ENCODE measurements at regions of chr19 and their contacts with region 1.

Region 1: DNA sequence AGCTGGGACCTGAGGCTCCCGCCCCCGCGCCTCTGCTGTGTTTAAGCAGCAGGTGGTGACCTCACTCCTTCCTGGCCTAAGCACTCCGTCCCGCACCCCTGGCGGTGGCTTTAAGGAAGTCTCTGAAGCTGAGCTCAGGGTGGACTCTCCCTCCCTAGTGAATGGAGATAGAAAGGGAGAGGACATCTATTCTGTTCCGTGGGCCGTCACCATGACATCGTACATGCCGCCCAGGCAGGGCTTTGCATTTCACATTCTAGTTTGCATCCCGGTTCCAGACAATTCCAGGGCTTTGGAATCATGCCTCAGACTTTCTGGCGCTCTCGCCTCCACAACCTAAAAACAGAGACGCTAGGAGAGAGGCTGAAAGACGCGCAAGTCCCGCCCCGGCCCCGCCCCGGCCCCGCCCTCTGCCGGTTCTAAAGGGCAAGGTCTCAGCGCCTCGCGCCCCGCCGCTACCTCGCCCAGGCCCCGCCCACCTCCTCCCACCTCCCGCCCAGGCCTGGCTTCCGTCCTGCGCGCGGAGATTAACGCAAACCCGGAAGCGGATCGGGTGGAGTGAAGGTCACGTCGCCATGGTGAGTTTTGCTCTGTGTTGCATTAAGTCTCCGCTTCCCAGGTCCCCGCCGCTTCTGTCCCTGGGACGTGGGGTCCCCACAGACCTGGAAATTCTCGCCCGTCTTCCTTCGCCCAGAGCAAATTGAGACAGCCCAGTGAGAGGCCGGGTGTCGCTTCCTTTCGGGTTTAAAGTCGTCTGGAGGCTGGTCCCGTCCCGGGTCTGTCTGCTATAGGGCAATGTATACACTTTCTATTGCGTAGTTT is at the start of gene ZNF808:
- DNase-seq: peak; percentile 79
- ATAC-seq: peak; percentile 89
- H3K4me3 Mint-ChIP-seq: peak within 1 kb of the TSS; percentile 98
- H3K27ac Mint-ChIP-seq: peak within 1 kb of the TSS; percentile 98
- H3K4me1 Mint-ChIP-seq: peaks cover 25% of the 10 kb centered on the region
- H3K27me3 Mint-ChIP-seq: no peaks in the 10 kb centered on the region
- CTCF ChIP-seq: no peak
- total RNA-seq, gene ZNF808: 31.1 and 33.7 TPM in 2 replicates

Region 2: GRCh38 chr19:52296773-52297600 is 230.4 kb before region 1 on chr19 and contains the start of gene ZNF480:
- CTCF ChIA-PET with region 1: no interaction called
- POLR2A ChIA-PET with region 1: no interaction called
- intact Hi-C with region 1: loop called (anchors 5 kb)
- DNase-seq: peak; percentile 78
- ATAC-seq: peak; percentile 80
- H3K4me3 Mint-ChIP-seq: peak within 1 kb of the TSS; percentile 98
- H3K27ac Mint-ChIP-seq: peak within 1 kb of the TSS; percentile 98
- H3K4me1 Mint-ChIP-seq: peaks cover 21% of the 10 kb centered on the region
- H3K27me3 Mint-ChIP-seq: no peaks in the 10 kb centered on the region
- CTCF ChIP-seq: no peak
- total RNA-seq, gene ZNF480: 24.0 and 25.5 TPM in 2 replicates

Region 3: DNA sequence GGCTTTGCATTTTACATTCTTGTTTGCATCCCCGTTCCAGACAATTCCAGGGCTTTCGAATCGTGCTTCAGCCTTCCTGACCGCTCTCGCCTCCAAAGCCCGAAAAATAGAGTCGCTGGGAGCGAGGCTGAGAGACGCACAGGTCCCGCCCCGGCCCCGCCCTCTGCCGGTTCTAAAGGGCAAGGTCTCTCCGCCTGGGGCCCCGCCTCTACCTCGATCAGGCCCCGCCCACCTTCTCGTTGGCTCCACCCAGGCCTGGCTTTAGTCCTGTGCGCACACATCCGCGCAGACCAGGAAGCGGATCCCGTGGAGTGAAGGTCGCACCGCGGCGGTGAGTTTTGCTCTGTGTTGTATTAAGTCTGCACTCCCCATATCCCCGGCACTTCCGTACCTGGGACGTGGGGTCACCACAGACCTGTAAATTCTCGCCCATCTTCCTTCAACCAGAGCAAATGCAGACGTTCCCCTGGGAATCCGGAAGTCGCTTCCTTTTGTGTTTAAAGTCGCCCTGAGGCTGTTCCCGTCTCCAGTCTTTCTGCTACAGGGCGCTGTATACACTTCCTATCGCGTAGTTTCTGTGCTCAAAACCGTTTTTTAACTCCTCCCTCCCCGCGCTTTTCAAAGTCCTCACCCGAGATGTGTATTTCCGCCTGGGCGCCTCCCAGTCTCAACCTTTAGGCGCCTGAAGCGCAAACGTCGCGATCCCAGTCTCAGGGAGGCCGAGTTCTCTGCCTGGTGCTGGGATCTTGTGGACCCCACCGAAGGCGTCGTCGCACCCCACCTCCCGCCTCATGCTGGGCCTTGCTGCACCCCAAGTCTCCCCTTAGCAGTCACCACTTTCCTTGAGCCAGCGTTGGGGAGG is 42.9 kb after region 1 on chr19 and contains the start of gene ZNF701:
- CTCF ChIA-PET with region 1: no interaction called
- POLR2A ChIA-PET with region 1: interaction called, 3 read pairs
- intact Hi-C with region 1: loop called (anchors 1 kb)
- DNase-seq: peak; percentile 98
- ATAC-seq: peak; percentile 99
- H3K4me3 Mint-ChIP-seq: peak within 1 kb of the TSS; percentile 98
- H3K27ac Mint-ChIP-seq: peak within 1 kb of the TSS; percentile 97
- H3K4me1 Mint-ChIP-seq: peaks cover 33% of the 10 kb centered on the region
- H3K27me3 Mint-ChIP-seq: no peaks in the 10 kb centered on the region
- CTCF ChIP-seq: no peak
- total RNA-seq, gene ZNF701: 30.6 and 32.7 TPM in 2 replicates

Region 4: GRCh38 chr19:52637718-52638585 is 110.6 kb after region 1 on chr19 and contains the start of gene ZNF83:
- CTCF ChIA-PET with region 1: no interaction called
- POLR2A ChIA-PET with region 1: interaction called, 3 read pairs
- intact Hi-C with region 1: loop called (anchors 1 kb)
- DNase-seq: peak; percentile 89
- ATAC-seq: peak; percentile 94
- H3K4me3 Mint-ChIP-seq: peak within 1 kb of the TSS; percentile 95
- H3K27ac Mint-ChIP-seq: peak within 1 kb of the TSS; percentile 98
- H3K4me1 Mint-ChIP-seq: peaks cover 15% of the 10 kb centered on the region
- H3K27me3 Mint-ChIP-seq: no peaks in the 10 kb centered on the region
- CTCF ChIP-seq: no peak
- total RNA-seq, gene ZNF83: 42.3 and 49.4 TPM in 2 replicates

Region 5: GRCh38 chr19:52660981-52661380 is 133.6 kb after region 1 on chr19:
- CTCF ChIA-PET with region 1: no interaction called
- POLR2A ChIA-PET with region 1: no interaction called
- intact Hi-C with region 1: no loop called
- DNase-seq: no peak
- ATAC-seq: no peak
- H3K4me3 Mint-ChIP-seq: no peak overlapping the region
- H3K27ac Mint-ChIP-seq: no peak overlapping the region
- H3K4me1 Mint-ChIP-seq: no peaks in the 10 kb centered on the region
- H3K27me3 Mint-ChIP-seq: no peaks in the 10 kb centered on the region
- CTCF ChIP-seq: no peak

Region 6: DNA sequence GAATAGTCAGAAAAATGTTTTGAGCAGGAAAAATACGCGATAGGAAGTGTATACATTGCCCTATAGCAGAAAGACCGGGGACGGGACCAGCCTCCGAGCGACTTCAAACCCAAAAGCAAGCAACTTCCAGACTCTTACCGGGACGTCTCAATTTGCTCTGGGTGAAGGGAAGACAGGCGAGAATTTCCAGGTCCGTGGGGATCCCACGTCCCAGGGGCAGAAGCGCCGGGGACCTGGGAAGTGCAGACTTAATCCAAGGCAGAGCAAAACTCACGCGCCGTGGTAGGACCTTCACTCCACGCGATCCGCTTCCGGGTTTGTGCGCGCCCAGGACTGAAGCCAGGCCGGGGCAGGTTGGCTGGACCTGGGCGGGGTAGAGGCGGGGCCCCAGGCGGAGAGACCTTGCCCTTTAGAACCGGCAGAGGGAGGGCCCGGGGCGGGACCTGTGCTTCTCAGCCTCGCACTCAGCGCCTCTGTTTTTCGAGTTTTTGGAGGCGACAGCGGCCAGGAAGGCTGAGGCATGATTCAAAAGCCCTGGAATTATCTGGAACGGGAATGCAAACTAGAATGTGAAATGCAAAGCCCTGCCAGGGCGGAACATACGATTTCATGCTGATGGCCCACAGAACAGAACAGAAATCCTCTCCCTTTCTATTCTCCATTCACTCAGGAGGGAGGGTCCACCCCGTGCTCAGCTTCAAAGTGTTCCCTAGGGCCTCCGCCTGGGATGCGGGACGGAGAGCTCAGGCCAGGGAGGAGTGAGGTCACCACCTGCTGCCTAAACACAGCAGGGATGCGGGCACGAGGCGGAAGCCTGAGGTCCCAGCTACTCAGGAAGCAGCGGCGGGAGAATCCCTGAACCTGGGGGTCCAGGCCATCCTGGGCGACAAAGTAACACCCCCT is 259.4 kb after region 1 on chr19 and contains the start of gene ZNF600:
- CTCF ChIA-PET with region 1: no interaction called
- POLR2A ChIA-PET with region 1: no interaction called
- intact Hi-C with region 1: loop called (anchors 1 kb)
- DNase-seq: peak; percentile 88
- ATAC-seq: peak; percentile 99
- H3K4me3 Mint-ChIP-seq: peak within 1 kb of the TSS; percentile 96
- H3K27ac Mint-ChIP-seq: peak within 1 kb of the TSS; percentile 90
- H3K4me1 Mint-ChIP-seq: peaks cover 36% of the 10 kb centered on the region
- H3K27me3 Mint-ChIP-seq: no peaks in the 10 kb centered on the region
- CTCF ChIP-seq: no peak
- total RNA-seq, gene ZNF600: 25.2 and 30.5 TPM in 2 replicates

Region 7: GRCh38 chr19:52942386-52943133 is 415.2 kb after region 1 on chr19:
- CTCF ChIA-PET with region 1: no interaction called
- POLR2A ChIA-PET with region 1: interaction called, 3 read pairs
- intact Hi-C with region 1: loop called (anchors 1 kb)
- DNase-seq: peak; percentile 98
- ATAC-seq: peak; percentile 99
- H3K4me3 Mint-ChIP-seq: peak overlapping the region; percentile 96
- H3K27ac Mint-ChIP-seq: peak overlapping the region; percentile 92
- H3K4me1 Mint-ChIP-seq: peaks cover 31% of the 10 kb centered on the region
- H3K27me3 Mint-ChIP-seq: no peaks in the 10 kb centered on the region
- CTCF ChIP-seq: no peak

Region 8: GRCh38 chr19:53076977-53077376 is 549.6 kb after region 1 on chr19:
- CTCF ChIA-PET with region 1: no interaction called
- POLR2A ChIA-PET with region 1: no interaction called
- intact Hi-C with region 1: no loop called
- DNase-seq: no peak
- ATAC-seq: no peak
- H3K4me3 Mint-ChIP-seq: no peak overlapping the region
- H3K27ac Mint-ChIP-seq: no peak overlapping the region
- H3K4me1 Mint-ChIP-seq: peaks cover 4% of the 10 kb centered on the region
- H3K27me3 Mint-ChIP-seq: no peaks in the 10 kb centered on the region
- CTCF ChIP-seq: no peak

Measured in activated B cell treated with CpG ODN at 0.5 μM for 24 hours (primary cell).